ENCODE measurements at regions of chr14 and their contacts with region 1.

Region 1: DNA sequence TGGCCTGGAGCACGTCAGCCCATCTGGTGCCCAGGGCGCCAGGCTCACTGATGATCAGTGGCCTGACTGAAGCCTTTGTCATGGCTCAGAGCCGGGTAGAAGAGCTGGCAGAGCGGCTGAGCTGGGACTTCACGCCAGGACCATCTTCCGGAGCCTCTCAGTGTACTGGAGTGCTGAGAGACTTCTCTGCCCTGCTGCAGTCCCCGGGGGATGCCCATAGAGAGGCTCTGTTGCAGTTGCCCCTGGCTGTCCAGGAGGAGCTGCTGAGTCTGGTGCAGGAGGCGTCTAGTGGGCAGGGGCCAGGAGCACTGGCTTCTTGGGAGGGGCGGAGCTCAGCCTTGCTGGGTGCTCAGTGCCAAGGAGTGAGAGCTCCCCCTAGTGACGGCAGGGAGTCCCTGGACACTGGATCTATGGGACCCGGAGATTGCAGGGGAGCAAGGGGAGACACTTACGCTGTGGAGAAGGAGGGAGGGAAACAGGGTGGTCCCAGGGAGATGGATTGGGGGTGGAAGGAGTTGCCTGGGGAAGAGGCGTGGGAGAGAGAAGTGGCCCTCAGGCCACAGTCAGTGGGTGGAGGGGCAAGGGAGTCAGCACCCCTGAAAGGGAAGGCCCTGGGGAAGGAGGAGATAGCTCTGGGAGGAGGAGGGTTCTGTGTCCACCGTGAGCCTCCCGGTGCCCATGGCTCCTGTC is 2.0 kb downstream of the KHNYN start:
- DNase-seq: peak; percentile 93
- ATAC-seq: peak; percentile 58

Region 2: DNA sequence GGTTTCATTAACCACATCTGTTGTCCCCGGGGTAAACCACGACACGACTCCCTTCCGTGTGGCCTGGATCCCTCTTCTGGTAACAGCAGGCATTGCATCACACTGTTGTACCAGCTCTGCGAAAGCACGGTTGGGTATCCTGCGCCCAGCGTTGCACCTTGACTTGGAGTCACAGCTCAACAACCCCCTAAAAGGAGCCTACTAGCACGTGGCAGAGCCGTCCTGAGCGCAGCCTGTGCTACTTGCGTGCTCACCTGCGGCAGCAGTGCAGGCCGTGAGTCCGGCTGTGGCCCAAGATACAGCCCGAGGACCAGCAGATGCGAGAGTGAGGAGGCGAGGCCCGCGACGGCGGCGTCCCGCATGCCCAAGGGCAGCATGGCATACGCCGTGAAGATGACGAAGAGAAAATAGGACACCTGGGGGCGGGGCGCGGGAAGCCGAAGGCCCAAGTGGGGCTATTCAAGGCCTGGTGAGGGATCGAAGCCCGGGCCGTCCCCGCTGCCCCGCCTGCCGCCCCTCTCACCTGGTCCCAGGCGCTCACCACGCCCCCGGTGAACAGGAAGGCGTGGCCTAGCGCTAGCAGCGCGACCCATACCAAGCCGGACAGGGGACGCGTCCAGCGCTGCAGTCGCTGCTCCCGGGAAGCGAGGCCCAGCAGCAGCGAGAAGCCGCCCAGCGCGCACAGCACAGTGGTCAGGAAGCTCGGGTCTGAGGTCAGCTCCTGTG is 99.3 kb before region 1 on chr14:
- intact Hi-C with region 1: loop called (anchors 2 to 10 kb)
- DNase-seq: peak; percentile 74 to 83
- ATAC-seq: peak; percentile 67

Region 3: DNA sequence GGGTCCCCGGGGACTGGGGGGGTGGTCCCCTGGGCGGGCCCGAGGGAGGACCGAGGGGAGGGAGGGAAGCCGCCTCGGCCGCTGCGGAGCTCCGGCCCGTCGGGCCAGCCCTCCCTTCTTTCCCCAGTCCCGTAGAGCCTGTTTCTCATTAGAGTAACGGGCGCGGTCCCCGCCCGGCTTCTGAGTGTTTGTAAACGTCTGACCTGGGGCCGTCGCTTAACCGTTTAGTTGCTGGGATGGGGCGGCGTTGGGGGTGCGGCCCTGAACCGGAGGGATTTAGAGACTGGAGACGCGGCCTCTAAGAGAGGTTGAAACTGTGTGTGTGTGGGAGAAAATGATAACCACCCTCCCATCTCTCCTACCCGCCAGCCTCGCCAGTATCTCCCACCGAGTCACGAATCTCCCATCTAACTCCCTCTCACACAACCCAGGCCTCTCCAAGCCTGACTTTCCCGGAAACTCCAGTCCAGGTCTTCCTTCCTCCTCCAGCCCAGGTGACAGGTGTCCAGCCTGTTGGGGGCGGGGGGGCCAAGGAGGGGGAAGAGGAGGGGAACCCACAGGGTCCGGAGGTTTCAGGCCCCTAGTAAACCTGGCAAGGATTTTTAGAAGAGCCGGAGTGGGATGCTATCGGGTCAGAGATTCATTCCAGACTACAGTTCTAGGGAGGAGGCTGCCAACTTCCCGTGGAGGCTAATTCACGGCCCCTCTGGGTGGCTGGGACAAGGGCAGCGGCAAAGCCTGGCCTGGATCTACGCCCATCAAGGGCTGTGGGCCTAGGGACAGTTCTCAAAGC is 64.8 kb before region 1 on chr14:
- intact Hi-C with region 1: loop called (anchors 5 to 10 kb)
- DNase-seq: peak; percentile 92 to 93
- ATAC-seq: peak; percentile 80

Region 4: DNA sequence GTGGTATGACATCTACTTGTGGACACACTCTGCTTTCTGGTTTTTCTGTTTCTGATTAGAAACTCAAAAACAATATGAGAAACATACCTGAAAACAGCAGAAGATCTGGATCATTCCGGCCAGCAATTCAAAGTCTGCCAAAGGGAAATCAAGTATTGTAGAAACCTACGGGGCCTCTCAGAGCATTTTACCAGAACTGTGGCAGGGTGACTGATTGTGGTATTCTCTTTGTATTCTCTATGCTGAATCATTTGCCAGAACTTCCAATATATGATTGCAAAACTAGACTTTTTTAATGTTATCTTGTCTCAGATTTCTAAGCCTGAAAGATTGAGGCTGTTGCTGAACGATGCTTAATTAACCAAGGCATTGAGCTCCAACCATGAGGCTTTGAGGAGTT is 208.2 kb after region 1 on chr14:
- intact Hi-C with region 1: no loop called
- DNase-seq: no peak
- ATAC-seq: no peak